Transverse colon (tissue), 4 donors: ENCODE measurements at regions of chr2 and their contacts with region 1.

Region 1: DNA sequence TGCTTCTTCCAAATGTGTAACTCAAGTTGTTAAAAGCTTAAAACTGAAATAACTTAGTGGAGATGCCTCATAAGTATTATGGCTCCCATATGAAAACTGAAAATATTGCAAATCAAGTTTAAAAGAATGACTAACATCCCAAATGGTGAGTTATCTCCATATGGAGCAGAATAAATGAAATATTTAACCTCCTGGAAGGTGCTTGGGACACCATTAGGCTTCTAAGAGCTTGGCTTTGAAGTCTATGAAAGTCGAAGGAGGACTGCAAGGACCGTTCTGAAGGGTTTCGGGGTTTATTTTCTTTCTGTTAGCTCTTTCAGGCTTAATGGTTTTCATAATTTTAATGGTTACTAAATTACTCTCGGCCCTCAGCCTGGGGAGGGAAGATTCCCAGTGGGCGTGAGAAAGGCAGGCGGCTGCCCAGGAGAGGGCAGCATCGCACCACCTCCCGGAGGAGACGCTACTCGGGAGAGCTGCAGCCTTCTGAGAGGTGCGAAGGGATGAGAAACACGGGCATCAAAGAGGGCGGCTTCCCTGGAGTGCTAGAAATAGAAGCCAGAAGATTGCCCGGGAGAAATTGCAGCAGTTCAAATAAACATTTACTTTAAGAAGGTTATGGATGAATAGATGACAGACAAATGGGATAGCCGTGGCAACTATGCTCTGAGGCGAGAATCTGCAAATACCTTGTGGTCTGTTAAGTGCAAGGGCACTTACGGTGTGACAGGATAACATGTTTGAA is 43.1 kb downstream of the MAP3K19 start:
- DNase-seq: peak; percentile 76
- H3K4me3 ChIP-seq: no peak overlapping the region
- H3K27ac ChIP-seq: no peak overlapping the region
- H3K4me1 ChIP-seq: peaks cover 0 to 7% (median 3%) of the 10 kb centered on the region in 4 donors
- H3K27me3 ChIP-seq: peaks cover 26% of the 10 kb centered on the region
- CTCF ChIP-seq: peak; percentile 77 to 88 (median 87)
- EP300 ChIP-seq: no peak
- POLR2A ChIP-seq: no peak

Region 2: GRCh38 chr2:135030826-135031225 is 26.6 kb after region 1 on chr2:
- in situ Hi-C with region 1: no loop called
- intact Hi-C with region 1: no loop called
- DNase-seq: no peak
- H3K4me3 ChIP-seq: no peak overlapping the region
- H3K27ac ChIP-seq: no peak overlapping the region
- H3K4me1 ChIP-seq: no peaks in the 10 kb centered on the region
- H3K27me3 ChIP-seq: no peaks in the 10 kb centered on the region
- CTCF ChIP-seq: no peak
- EP300 ChIP-seq: no peak
- POLR2A ChIP-seq: no peak

Region 3: GRCh38 chr2:135709992-135710391 is 705.8 kb after region 1 on chr2:
- in situ Hi-C with region 1: loop called (anchors 10 to 25 kb)
- intact Hi-C with region 1: no loop called
- DNase-seq: peak; percentile 56
- H3K4me3 ChIP-seq: no peak overlapping the region
- H3K27ac ChIP-seq: no peak overlapping the region
- H3K4me1 ChIP-seq: no peaks in the 10 kb centered on the region
- H3K27me3 ChIP-seq: no peaks in the 10 kb centered on the region
- CTCF ChIP-seq: peak; percentile 88 to 96 (median 95)
- EP300 ChIP-seq: no peak
- POLR2A ChIP-seq: no peak

Region 4: GRCh38 chr2:135728064-135728743 is 724.0 kb after region 1 on chr2:
- in situ Hi-C with region 1: loop called in 2 of 4 experiments (anchors 25 kb)
- intact Hi-C with region 1: loop called (anchors 10 kb)
- DNase-seq: no peak
- H3K4me3 ChIP-seq: no peak overlapping the region
- H3K27ac ChIP-seq: no peak overlapping the region
- H3K4me1 ChIP-seq: no peaks in the 10 kb centered on the region
- H3K27me3 ChIP-seq: no peaks in the 10 kb centered on the region
- CTCF ChIP-seq: no peak
- EP300 ChIP-seq: no peak
- POLR2A ChIP-seq: no peak